Vagina (tissue), 2 donors: ENCODE measurements at regions of chr9 and their contacts with region 1.

Region 1: DNA sequence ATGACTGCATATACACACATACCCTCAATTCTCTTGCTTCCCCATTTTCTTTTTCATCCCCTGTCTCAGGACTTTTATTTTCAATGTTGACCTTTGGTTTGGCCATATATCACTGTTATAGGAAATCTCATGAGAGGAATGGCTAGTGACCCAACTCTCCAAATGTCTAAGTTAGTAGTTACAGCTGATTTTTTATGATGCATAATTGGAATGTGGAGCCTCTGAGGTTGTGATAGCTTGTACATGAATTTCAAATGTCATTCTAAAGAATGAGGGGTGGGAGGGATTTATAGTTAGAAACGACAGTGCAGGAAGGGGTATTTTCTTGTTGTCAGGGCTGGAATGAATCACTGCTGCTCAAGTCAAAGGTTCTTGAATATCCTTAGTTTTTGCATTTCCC is 356.1 kb downstream of the NTRK2 start:
- DNase-seq: no peak
- H3K4me3 ChIP-seq: no peak overlapping the region
- H3K27ac ChIP-seq: no peak overlapping the region
- H3K4me1 ChIP-seq: no peaks in the 10 kb centered on the region
- H3K27me3 ChIP-seq: no peaks in the 10 kb centered on the region
- CTCF ChIP-seq: no peak
- POLR2A ChIP-seq: no peak

Region 2: GRCh38 chr9:84970432-84970831 is 55.2 kb before region 1 on chr9:
- intact Hi-C with region 1: loop called (anchors 5 kb)
- DNase-seq: no peak
- H3K4me3 ChIP-seq: no peak overlapping the region
- H3K27ac ChIP-seq: no peak overlapping the region
- H3K4me1 ChIP-seq: no peaks in the 10 kb centered on the region
- H3K27me3 ChIP-seq: no peaks in the 10 kb centered on the region
- CTCF ChIP-seq: no peak
- POLR2A ChIP-seq: no peak